Mucosa of descending colon (tissue), 3 donors: ENCODE measurements at regions of chr16 and their contacts with region 1.

Region 1: DNA sequence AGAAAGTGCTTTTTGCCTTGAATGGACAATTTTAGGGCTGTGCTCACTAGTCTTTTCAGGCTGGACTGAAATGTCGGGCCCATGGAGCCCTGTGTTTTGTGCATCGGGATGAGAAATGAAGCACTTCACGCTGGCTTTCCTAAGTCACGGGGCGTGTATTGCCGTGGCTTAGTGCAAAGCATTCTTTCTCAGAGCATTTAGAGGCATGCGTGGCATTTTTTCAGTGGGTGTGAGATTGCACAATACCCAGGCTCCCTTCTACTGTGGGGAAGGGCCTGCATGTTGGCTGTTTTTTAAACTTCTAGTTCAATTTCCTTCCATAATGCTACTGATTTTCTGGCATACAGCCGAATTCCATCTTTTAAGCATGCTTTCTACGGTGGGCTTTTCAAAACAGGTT is 12.6 kb upstream of the POLR3E start:
- DNase-seq: no peak
- ATAC-seq: no peak
- H3K4me3 ChIP-seq: no peak overlapping the region
- H3K4me1 ChIP-seq: no peaks in the 10 kb centered on the region
- CTCF ChIP-seq: no peak

Region 2: GRCh38 chr16:22240023-22240710 is 44.5 kb before region 1 on chr16:
- intact Hi-C with region 1: loop called in 1 of 2 experiments (anchors 5 kb)
- DNase-seq: no peak
- ATAC-seq: no peak
- H3K4me3 ChIP-seq: no peak overlapping the region
- H3K4me1 ChIP-seq: peaks cover 29% of the 10 kb centered on the region
- CTCF ChIP-seq: no peak

Region 3: DNA sequence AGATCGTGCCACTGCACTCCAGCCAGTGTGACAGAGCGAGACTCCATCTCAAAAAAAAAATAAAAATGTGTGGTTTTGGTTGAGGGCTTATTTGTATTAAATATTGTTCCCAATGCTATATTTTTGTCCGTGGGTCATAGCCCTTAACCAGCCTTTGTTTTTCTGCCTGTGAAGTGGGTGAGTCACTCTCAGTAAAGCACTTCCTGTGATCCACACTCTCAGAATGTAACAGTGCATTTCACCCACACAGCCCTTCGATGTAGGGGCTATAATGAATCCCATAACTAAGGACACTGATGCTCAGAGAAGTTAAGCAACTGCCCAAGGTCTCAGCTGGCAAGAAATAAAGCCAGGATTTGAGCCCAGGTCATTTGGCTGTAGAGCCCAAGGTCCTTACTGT is 22.2 kb before region 1 on chr16:
- intact Hi-C with region 1: no loop called
- DNase-seq: no peak
- ATAC-seq: no peak
- H3K4me3 ChIP-seq: no peak overlapping the region
- H3K4me1 ChIP-seq: no peaks in the 10 kb centered on the region
- CTCF ChIP-seq: no peak